CD4-positive, alpha-beta memory T cell (primary cell): ENCODE measurements at regions of chr2 and their contacts with region 1.

Region 1: DNA sequence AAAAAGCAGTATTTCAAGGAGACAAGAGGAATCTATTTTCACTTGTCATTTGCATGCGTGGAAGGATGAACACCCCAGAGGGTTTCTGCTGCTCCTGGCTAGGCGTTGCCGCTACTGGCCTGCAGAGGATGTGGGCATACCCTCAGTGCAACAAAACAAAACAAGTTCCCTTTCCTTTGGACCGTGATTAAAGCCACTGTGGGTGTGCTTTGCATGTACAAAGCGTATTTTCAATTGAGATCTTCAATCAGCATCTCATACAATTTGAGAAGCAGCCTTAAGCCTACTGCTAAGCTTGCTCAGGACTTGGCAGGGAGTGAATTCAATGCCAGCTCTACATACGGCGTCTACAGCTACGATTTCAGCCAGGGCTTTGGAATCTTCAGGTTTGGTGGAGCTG is 298.4 kb downstream of the LPIN1 start:
- DNase-seq: peak in 4 of 5 donors; percentile 61 to 75 (median 66)
- H3K4me3 ChIP-seq: no peak overlapping the region
- H3K4me3 Mint-ChIP-seq: peak overlapping the region in 7 of 8 donors; percentile 12 to 79 (median 59)
- H3K27ac ChIP-seq: no peak overlapping the region
- H3K27ac Mint-ChIP-seq: peak overlapping the region; percentile 0 to 70 (median 21)
- H3K4me1 ChIP-seq: peaks cover 58% of the 10 kb centered on the region
- H3K4me1 Mint-ChIP-seq: peaks cover 38 to 51% (median 46%) of the 10 kb centered on the region in 4 donors
- H3K27me3 ChIP-seq: no peaks in the 10 kb centered on the region
- H3K27me3 Mint-ChIP-seq: peaks cover 0 to 3% of the 10 kb centered on the region in 2 donors

Region 2: GRCh38 chr2:12005886-12006681 is 38.8 kb before region 1 on chr2:
- CTCF ChIA-PET with region 1: no interaction called
- POLR2A ChIA-PET with region 1: interaction called, 10 read pairs
- intact Hi-C with region 1: no loop called
- DNase-seq: peak; percentile 78 to 84 (median 82)
- H3K4me3 ChIP-seq: no peak overlapping the region
- H3K4me3 Mint-ChIP-seq: peak overlapping the region in 4 of 8 donors; percentile 40 to 57 (median 55)
- H3K27ac ChIP-seq: no peak overlapping the region
- H3K27ac Mint-ChIP-seq: peak overlapping the region in 4 of 7 donors; percentile 7 to 83 (median 64)
- H3K4me1 ChIP-seq: peaks cover 21% of the 10 kb centered on the region
- H3K4me1 Mint-ChIP-seq: peaks cover 16 to 33% (median 22%) of the 10 kb centered on the region in 4 donors
- H3K27me3 ChIP-seq: peaks cover 4% of the 10 kb centered on the region
- H3K27me3 Mint-ChIP-seq: peaks cover 14 to 36% of the 10 kb centered on the region in 2 donors